Activated B cell treated with CpG ODN at 0.5 μM for 24 hours (primary cell): ENCODE measurements at regions of chr6 and their contacts with region 1.

Region 1: DNA sequence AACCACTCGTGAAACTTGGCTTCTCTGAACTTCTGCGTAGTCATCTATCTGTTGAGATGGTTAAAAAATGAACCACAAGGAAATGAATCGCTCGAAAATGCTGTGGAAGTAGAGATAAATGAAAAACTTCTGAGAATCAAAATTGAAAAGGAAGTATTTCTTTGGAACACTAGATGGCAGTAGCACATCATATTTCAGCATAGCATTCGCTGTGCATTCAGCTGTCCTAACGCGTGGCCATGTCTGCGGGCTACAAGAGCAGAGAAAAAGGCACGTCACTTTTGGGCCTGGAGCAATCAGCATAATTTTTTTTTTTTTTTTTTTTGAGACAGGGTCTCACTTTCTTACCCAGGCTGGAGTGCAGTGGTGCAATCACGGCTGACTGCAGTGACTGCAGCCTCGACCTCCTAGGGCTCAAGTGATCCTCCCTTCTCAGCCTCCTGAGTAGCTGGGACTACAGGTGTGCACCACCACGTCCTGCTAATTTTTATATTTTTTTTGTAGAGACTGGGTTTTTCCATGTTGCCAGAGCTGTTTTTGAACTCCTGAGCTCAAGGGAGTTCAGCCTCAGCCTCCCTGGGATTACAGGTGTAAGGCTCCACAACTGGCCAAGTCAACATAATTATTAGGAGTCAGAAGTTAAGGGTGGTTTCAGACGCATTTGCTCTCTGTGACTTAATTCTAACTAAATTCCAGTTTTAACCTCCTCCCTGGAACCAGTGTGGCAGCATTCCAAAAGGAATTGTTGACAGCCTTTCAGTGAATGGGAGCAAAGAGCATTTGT is 8.8 kb upstream of the PERP start:
- DNase-seq: no peak
- ATAC-seq: peak; percentile 85
- H3K4me3 Mint-ChIP-seq: no peak overlapping the region
- H3K27ac Mint-ChIP-seq: no peak overlapping the region
- H3K4me1 Mint-ChIP-seq: peaks cover 6% of the 10 kb centered on the region
- H3K27me3 Mint-ChIP-seq: peaks cover 26% of the 10 kb centered on the region
- CTCF ChIP-seq: peak; percentile 61

Region 2: GRCh38 chr6:136464148-136464547 is 1651.9 kb before region 1 on chr6:
- CTCF ChIA-PET with region 1: no interaction called
- POLR2A ChIA-PET with region 1: no interaction called
- intact Hi-C with region 1: no loop called
- DNase-seq: no peak
- ATAC-seq: no peak
- H3K4me3 Mint-ChIP-seq: no peak overlapping the region
- H3K27ac Mint-ChIP-seq: no peak overlapping the region
- H3K4me1 Mint-ChIP-seq: peaks cover 8% of the 10 kb centered on the region
- H3K27me3 Mint-ChIP-seq: peaks cover 12% of the 10 kb centered on the region
- CTCF ChIP-seq: no peak

Region 3: DNA sequence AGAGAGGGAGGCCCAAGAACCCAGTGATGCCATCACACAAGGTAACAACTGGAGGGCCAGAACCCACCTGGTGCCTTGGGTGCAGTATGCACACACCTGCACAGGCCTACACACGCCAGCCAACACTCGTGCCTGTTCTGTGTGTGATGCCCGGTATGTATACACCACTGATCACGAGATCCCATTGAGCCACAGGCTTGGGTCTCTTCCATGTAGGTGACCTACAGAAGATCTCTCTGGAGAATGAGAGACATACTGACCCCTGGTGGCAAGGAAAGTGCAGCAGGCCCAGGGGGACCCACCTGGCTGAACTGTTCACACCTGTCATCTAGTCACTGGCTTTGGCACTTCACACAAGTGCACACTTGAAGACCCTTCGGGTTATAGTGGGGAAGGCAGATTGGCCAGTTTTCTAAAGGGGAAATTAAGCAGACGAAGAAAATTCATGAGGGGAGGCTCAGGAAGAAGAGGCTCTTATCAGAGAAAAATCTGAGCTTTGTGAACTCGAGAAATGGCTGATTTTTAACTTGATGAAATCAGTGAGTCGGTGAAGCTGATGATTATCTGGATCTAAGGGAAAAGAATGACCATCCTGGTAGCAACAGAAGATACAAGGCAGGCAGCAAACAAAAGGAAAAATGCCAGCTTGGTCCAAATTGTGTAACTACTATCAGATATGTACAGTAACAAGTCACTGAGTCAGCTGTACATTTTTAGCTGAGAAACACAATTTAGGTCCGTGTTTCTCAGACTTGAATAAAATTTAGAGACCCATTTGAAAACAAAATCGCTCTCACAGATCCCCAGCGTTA is 171.3 kb after region 1 on chr6:
- CTCF ChIA-PET with region 1: interaction called, 44 read pairs
- POLR2A ChIA-PET with region 1: no interaction called
- intact Hi-C with region 1: loop called (anchors 1 kb)
- DNase-seq: no peak
- ATAC-seq: peak; percentile 28
- H3K4me3 Mint-ChIP-seq: no peak overlapping the region
- H3K27ac Mint-ChIP-seq: no peak overlapping the region
- H3K4me1 Mint-ChIP-seq: no peaks in the 10 kb centered on the region
- H3K27me3 Mint-ChIP-seq: peaks cover 7% of the 10 kb centered on the region
- CTCF ChIP-seq: no peak

Region 4: GRCh38 chr6:138509371-138509770 is 393.3 kb after region 1 on chr6:
- CTCF ChIA-PET with region 1: interaction called, 23 read pairs
- POLR2A ChIA-PET with region 1: no interaction called
- intact Hi-C with region 1: loop called (anchors 2 kb)
- DNase-seq: no peak
- ATAC-seq: no peak
- H3K4me3 Mint-ChIP-seq: no peak overlapping the region
- H3K27ac Mint-ChIP-seq: no peak overlapping the region
- H3K4me1 Mint-ChIP-seq: peaks cover 2% of the 10 kb centered on the region
- H3K27me3 Mint-ChIP-seq: peaks cover 15% of the 10 kb centered on the region
- CTCF ChIP-seq: no peak

Region 5: DNA sequence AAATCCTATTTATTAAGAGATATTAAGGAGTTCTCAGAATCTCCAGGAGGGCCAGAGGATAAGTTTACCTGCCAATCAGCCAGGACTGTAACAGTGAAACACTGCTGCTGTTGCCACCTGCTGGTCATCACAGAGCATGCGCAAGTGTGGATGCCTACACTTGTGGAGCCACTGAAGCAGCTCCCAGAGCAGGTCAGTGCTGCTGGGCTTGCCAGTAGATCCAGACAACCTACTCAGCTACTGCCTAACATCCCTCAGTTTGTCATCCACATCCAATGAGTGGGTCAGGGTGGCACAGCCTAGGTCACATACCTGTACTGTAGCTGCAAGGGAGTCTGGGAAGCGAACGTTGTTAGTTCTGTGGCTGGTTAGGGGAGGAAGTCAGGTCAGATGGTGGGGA is 401.6 kb after region 1 on chr6:
- CTCF ChIA-PET with region 1: interaction called, 64 read pairs
- POLR2A ChIA-PET with region 1: interaction called, 5 read pairs
- intact Hi-C with region 1: loop called (anchors 1 kb)
- DNase-seq: peak; percentile 24
- ATAC-seq: peak; percentile 84
- H3K4me3 Mint-ChIP-seq: no peak overlapping the region
- H3K27ac Mint-ChIP-seq: no peak overlapping the region
- H3K4me1 Mint-ChIP-seq: no peaks in the 10 kb centered on the region
- H3K27me3 Mint-ChIP-seq: peaks cover 20% of the 10 kb centered on the region
- CTCF ChIP-seq: peak; percentile 58

Region 6: GRCh38 chr6:138588805-138589434 is 472.9 kb after region 1 on chr6:
- CTCF ChIA-PET with region 1: interaction called, 12 read pairs
- POLR2A ChIA-PET with region 1: no interaction called
- intact Hi-C with region 1: loop called (anchors 1 kb)
- DNase-seq: no peak
- ATAC-seq: peak; percentile 48
- H3K4me3 Mint-ChIP-seq: no peak overlapping the region
- H3K27ac Mint-ChIP-seq: no peak overlapping the region
- H3K4me1 Mint-ChIP-seq: peaks cover 27% of the 10 kb centered on the region
- H3K27me3 Mint-ChIP-seq: no peaks in the 10 kb centered on the region
- CTCF ChIP-seq: peak; percentile 71

Region 7: DNA sequence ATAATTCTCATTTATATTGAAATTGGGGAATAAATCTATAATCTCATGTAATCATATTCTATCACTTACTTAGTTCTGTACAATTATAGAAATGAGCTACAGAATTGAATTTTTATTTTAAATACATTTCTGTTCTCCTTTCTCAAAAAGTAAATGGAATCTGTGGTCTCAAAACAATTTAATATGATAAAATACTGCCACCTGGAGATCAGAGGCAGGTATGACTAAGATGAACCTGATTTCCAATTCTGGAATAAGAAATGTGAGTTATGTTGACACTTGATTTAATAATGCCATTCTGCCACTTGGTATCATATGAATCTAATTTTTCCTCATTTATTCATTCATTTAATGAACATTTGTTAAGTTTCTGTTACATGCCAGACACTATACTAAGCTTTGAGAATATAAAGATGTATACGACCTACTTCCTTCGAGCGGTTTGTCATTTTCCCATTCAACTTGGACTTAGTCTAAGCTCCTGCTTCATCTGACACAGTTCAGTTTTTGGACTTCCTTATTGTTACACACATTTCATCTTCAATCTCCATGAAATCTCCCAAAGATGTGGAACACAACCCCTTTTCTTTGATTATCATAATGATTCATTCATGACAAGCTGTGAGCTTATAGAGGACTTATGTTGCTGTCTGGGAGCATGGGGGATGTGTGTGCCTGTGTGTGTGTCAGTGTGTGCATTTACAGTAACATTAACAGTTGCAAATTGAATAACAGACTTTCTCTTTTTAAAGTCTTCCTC is 650.0 kb after region 1 on chr6:
- CTCF ChIA-PET with region 1: interaction called, 41 read pairs
- POLR2A ChIA-PET with region 1: no interaction called
- intact Hi-C with region 1: loop called (anchors 1 kb)
- DNase-seq: no peak
- ATAC-seq: no peak
- H3K4me3 Mint-ChIP-seq: no peak overlapping the region
- H3K27ac Mint-ChIP-seq: no peak overlapping the region
- H3K4me1 Mint-ChIP-seq: peaks cover 10% of the 10 kb centered on the region
- H3K27me3 Mint-ChIP-seq: no peaks in the 10 kb centered on the region
- CTCF ChIP-seq: peak; percentile 64